ENCODE measurements at regions of chr4 and their contacts with region 1.

Region 1: GRCh38 chr4:47383829-47384427 is 79.6 kb downstream of the COMMD8 start:
- DNase-seq: no peak

Region 2: GRCh38 chr4:46844325-46844917 is 539.5 kb before region 1 on chr4:
- intact Hi-C with region 1: loop called (anchors 10 kb)
- DNase-seq: peak in 35 of 42 donors; percentile 13 to 88 (median 62)

Region 3: DNA sequence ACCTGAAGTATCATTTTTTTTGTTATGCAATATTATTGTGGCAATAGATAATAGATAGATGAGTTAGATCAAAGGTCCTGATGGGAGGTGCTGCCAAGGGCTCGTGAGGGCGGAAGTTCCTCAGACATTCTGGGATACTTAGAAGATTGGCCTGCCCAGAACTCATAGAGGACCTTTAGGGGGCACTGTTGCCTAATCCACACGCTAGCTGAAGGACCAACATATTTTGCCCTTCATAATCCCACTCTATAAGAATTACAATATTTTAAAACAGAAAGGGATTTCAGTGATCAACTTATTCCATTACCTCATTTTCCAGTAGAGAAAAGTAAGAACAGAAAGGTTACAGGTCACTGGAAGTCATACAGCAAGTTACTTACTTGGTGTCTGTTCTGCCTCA is 451.9 kb before region 1 on chr4:
- intact Hi-C with region 1: loop called (anchors 10 kb)
- DNase-seq: peak in 37 of 42 donors; percentile 5 to 83 (median 43)

Region 4: GRCh38 chr4:47145630-47146029 is 238.3 kb before region 1 on chr4:
- intact Hi-C with region 1: loop called (anchors 10 kb)
- DNase-seq: peak in 23 of 42 donors; percentile 13 to 80 (median 46)